Mammary epithelial cell (primary cell): ENCODE measurements at regions of chr10 and their contacts with region 1.

Region 1: GRCh38 chr10:122435212-122435827 is 19.1 kb upstream of the ARMS2 start:
- DNase-seq: no peak
- H3K4me3 ChIP-seq: no peak overlapping the region
- H3K27ac ChIP-seq: no peak overlapping the region
- H3K4me1 ChIP-seq: no peaks in the 10 kb centered on the region
- H3K27me3 ChIP-seq: no peaks in the 10 kb centered on the region
- CTCF ChIP-seq: peak; percentile 44 to 54

Region 2: GRCh38 chr10:122279725-122280141 is 155.6 kb before region 1 on chr10:
- CTCF ChIA-PET with region 1: interaction called, 5 read pairs
- dilution Hi-C with region 1: no loop called
- in situ Hi-C with region 1: no loop called
- intact Hi-C with region 1: loop called (anchors 1 kb)
- DNase-seq: peak; percentile 46
- H3K4me3 ChIP-seq: no peak overlapping the region
- H3K27ac ChIP-seq: no peak overlapping the region
- H3K4me1 ChIP-seq: peaks cover 16% of the 10 kb centered on the region
- H3K27me3 ChIP-seq: no peaks in the 10 kb centered on the region
- CTCF ChIP-seq: peak; percentile 83 to 93

Region 3: DNA sequence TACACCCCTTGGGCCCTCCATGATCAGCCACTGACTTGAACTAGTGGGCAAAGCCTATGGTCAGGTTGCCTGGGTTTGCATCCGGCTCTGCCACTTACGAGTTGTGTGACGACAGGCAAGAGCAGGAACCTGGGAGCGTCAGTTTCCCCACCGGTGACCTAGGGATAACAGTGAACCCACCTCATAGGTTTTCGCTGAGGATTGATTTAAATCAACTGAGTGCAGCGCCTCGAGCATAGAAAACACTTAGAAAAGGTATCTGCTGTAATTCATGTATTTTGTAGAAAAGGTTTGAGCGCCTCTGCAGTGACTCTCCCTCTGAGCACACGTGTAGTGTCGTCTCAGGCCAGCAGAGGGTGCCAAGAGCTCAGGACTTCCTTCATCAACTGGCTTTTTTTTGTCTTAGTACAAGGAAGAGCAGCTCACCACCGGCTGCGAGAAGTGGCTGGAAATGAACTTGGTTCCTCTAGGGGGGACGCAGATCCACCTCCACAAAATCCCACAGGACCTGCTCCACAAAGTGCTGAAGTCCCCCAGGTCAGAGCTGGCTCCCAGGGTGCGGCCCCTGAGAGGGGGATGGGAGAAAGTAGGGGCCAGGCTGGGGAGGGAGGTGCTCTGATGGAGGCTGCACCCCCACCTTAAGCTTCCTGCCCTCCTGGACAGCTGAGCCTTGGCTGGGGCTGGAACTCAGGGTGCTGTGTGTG is 136.6 kb before region 1 on chr10:
- CTCF ChIA-PET with region 1: interaction called, 7 read pairs
- dilution Hi-C with region 1: no loop called
- in situ Hi-C with region 1: loop called (anchors 5 to 10 kb)
- intact Hi-C with region 1: loop called (anchors 1 kb)
- DNase-seq: peak; percentile 60
- H3K4me3 ChIP-seq: peak overlapping the region in 1 of 3 experiments; percentile 4
- H3K27ac ChIP-seq: no peak overlapping the region
- H3K4me1 ChIP-seq: peaks cover 16% of the 10 kb centered on the region
- H3K27me3 ChIP-seq: no peaks in the 10 kb centered on the region
- CTCF ChIP-seq: peak; percentile 92 to 98

Region 4: DNA sequence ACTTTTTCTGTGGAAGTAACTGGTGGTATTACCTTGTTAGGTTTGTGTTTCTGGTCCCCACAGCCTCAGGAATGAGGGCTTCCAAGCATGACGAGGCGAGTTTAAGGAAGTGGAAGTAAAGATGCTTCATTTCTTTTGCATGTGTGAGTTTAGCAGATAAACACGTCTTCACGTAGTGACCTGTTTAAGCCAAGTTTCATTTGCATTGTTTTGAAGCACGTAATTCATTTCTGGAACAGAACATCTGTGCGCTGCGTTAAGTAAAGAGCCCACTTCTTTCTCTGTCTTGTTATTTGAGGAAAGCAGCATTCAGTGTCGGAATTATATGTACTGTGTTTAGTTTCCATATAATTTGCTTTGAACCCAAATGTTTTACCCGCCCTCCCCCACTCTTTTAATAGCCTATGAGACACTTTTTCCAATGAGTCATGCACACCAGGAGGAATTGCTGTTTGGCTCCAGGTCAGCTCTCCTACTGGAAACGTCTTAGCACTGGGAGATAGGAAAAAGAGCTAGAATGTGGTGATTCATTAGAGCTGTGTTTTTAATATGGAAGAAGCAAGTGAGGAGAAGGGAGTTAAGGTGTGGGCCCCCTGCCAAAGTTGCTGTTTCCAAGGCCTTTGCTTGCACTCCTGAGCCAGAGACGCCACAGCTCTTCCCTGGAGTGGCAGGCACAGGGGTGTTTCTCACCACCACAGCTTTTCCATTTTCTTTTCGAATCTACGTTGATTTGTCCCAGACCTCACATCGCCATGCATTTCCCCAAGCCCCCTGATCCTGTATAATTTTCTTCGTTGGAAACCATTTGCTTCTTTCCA is 127.4 kb before region 1 on chr10:
- CTCF ChIA-PET with region 1: no interaction called
- dilution Hi-C with region 1: no loop called
- in situ Hi-C with region 1: loop called in 1 of 2 experiments (anchors 10 kb)
- intact Hi-C with region 1: no loop called
- DNase-seq: peak; percentile 93
- H3K4me3 ChIP-seq: peak overlapping the region in 1 of 3 experiments; percentile 38
- H3K27ac ChIP-seq: peak overlapping the region; percentile 96
- H3K4me1 ChIP-seq: peaks cover 21% of the 10 kb centered on the region
- H3K27me3 ChIP-seq: no peaks in the 10 kb centered on the region
- CTCF ChIP-seq: no peak